ENCODE measurements at regions of chr1 and their contacts with region 1.

Region 1: DNA sequence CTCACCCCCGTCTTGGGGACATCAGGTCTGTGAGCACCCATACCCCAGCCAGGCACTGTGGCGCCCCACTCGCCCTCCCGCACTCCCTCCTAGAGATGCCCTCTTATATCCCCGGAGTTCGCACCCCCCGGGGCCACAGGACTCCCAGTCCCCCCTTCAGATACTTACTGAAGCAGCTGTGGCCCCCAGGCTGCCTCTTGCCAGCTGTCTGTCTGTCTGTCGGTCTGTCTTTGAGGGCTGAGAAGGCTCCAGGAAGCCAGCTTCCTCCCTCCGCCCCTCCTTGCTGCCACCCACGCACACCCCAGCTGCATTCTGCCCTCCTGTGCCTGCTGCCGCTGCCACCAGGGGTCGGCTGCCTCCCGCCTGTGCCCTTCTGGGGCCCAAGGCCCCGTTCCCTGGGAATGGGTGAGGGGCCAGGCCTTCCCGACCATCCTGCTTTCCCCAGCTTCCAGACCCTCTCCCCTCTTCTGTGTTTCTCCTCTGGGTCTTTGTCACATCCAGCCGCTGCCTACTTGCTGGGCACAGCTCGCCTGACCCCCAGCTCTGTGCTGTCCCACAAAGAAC is at the start of gene PTPN7:
- DNase-seq: peak; percentile 63 to 86 (median 75)
- H3K4me3 ChIP-seq: peak within 1 kb of the TSS; percentile 87
- H3K4me3 Mint-ChIP-seq: peak within 1 kb of the TSS; percentile 91 to 100 (median 96)
- H3K27ac ChIP-seq: peak within 1 kb of the TSS; percentile 97
- H3K27ac Mint-ChIP-seq: peak within 1 kb of the TSS; percentile 96 to 100 (median 98)
- H3K4me1 ChIP-seq: peaks cover 84% of the 10 kb centered on the region
- H3K4me1 Mint-ChIP-seq: peaks cover 82 to 99% (median 91%) of the 10 kb centered on the region in 3 donors
- H3K27me3 ChIP-seq: no peaks in the 10 kb centered on the region
- H3K27me3 Mint-ChIP-seq: peaks cover 0 to 2% of the 10 kb centered on the region in 2 donors
- total RNA-seq, gene PTPN7: 446 to 449 TPM

Region 2: DNA sequence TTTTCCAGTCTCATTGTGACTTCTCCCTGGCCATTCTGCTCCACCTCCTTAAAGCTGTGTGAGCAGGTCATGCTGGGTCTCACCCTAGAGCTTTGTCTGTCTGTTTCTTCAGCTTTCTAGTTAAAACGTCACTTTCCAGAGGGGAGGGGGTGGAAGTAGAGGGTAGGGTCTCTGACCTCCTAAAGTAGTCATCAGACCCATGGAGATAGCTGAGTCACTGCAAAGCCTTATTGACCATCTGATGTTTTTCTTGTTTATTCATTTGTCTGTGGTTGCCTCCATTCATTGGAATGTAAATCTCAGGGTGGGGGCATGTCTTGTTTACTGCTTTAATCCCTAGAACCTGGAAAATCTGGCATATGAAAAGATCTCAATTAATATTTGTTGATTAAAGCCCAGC is 97.4 kb before region 1 on chr1:
- CTCF ChIA-PET with region 1: no interaction called
- POLR2A ChIA-PET with region 1: no interaction called
- DNase-seq: no peak
- H3K4me3 ChIP-seq: no peak overlapping the region
- H3K4me3 Mint-ChIP-seq: no peak overlapping the region
- H3K27ac ChIP-seq: no peak overlapping the region
- H3K27ac Mint-ChIP-seq: no peak overlapping the region
- H3K4me1 ChIP-seq: no peaks in the 10 kb centered on the region
- H3K4me1 Mint-ChIP-seq: no peaks in the 10 kb centered on the region
- H3K27me3 ChIP-seq: no peaks in the 10 kb centered on the region
- H3K27me3 Mint-ChIP-seq: peaks cover 5 to 22% of the 10 kb centered on the region in 2 donors

Region 3: DNA sequence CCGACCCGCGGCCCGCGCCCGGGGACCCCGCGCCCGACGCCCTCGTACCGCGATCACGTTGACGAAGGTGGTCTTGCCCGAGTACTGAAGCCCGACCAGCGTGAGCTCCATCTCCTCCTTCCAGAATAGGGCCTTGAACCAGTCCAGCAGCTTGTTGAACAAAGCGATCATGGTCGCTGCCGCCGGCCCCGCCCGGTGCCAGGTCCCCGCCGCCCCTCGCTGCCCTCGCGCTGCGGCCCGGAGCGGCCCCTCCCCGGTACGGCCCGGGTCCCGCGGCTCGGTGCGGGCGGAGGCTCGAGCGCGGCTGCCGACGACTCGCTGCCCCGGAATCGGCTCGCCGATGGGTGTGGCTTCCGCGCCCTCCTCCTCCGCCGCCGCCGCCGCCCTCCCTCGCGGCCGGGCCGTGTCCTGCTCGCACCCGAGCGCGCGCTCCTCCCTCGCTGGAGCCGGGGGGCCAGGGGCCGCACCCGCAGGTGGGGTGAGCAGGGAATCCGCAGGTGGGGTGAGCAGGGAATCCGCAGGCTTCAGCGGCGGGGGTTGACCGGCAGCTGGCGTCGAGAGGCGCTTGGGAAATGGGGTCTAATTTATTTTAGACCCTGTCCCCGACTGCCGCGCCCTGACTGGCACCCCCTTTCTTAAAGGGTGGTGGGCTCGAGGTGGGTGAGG is 15.9 kb before region 1 on chr1 and contains the start of gene ARL8A:
- CTCF ChIA-PET with region 1: interaction called, 23 read pairs
- POLR2A ChIA-PET with region 1: interaction called, 17 read pairs
- DNase-seq: peak; percentile 62 to 79 (median 65)
- H3K4me3 ChIP-seq: peak within 1 kb of the TSS; percentile 93
- H3K4me3 Mint-ChIP-seq: peak within 1 kb of the TSS; percentile 88 to 98 (median 94)
- H3K27ac ChIP-seq: peak within 1 kb of the TSS; percentile 79
- H3K27ac Mint-ChIP-seq: peak within 1 kb of the TSS; percentile 87 to 98 (median 96)
- H3K4me1 ChIP-seq: peaks cover 21% of the 10 kb centered on the region
- H3K4me1 Mint-ChIP-seq: peaks cover 32 to 50% (median 42%) of the 10 kb centered on the region in 3 donors
- H3K27me3 ChIP-seq: no peaks in the 10 kb centered on the region
- H3K27me3 Mint-ChIP-seq: no peaks in the 10 kb centered on the region
- total RNA-seq, gene ARL8A: 50.2 to 51.4 TPM

Region 4: GRCh38 chr1:202184750-202185460 is 24.4 kb after region 1 on chr1:
- CTCF ChIA-PET with region 1: interaction called, 22 read pairs
- POLR2A ChIA-PET with region 1: no interaction called
- DNase-seq: peak; percentile 41 to 76 (median 62)
- H3K4me3 ChIP-seq: no peak overlapping the region
- H3K4me3 Mint-ChIP-seq: peak overlapping the region in 1 of 7 donors; percentile 3
- H3K27ac ChIP-seq: no peak overlapping the region
- H3K27ac Mint-ChIP-seq: peak overlapping the region in 2 of 8 donors; percentile 37 to 39
- H3K4me1 ChIP-seq: peaks cover 8% of the 10 kb centered on the region
- H3K4me1 Mint-ChIP-seq: peaks cover 11 to 14% (median 13%) of the 10 kb centered on the region in 3 donors
- H3K27me3 ChIP-seq: no peaks in the 10 kb centered on the region
- H3K27me3 Mint-ChIP-seq: peaks cover 4 to 10% of the 10 kb centered on the region in 2 donors